ENCODE measurements at regions of chr11 and their contacts with region 1.

Region 1: GRCh38 chr11:64240394-64241174 is at the start of gene FKBP2:
- DNase-seq: peak; percentile 98
- ATAC-seq: peak; percentile 61
- H3K4me3 Mint-ChIP-seq: peak within 1 kb of the TSS; percentile 91
- H3K27ac Mint-ChIP-seq: peak within 1 kb of the TSS; percentile 98
- H3K4me1 Mint-ChIP-seq: peaks cover 75% of the 10 kb centered on the region
- H3K27me3 Mint-ChIP-seq: no peaks in the 10 kb centered on the region
- CTCF ChIP-seq: no peak
- total RNA-seq, gene FKBP2: 31.4 and 39.4 TPM in 2 replicates

Region 2: GRCh38 chr11:63986156-63986931 is 254.2 kb before region 1 on chr11 and contains the start of gene OTUB1:
- CTCF ChIA-PET with region 1: no interaction called
- POLR2A ChIA-PET with region 1: no interaction called
- intact Hi-C with region 1: loop called (anchors 5 kb)
- DNase-seq: peak; percentile 80
- ATAC-seq: peak; percentile 86
- H3K4me3 Mint-ChIP-seq: peak within 1 kb of the TSS; percentile 95
- H3K27ac Mint-ChIP-seq: peak within 1 kb of the TSS; percentile 98
- H3K4me1 Mint-ChIP-seq: peaks cover 43% of the 10 kb centered on the region
- H3K27me3 Mint-ChIP-seq: no peaks in the 10 kb centered on the region
- CTCF ChIP-seq: no peak
- total RNA-seq, gene OTUB1: 87.4 and 92.5 TPM in 2 replicates

Region 3: DNA sequence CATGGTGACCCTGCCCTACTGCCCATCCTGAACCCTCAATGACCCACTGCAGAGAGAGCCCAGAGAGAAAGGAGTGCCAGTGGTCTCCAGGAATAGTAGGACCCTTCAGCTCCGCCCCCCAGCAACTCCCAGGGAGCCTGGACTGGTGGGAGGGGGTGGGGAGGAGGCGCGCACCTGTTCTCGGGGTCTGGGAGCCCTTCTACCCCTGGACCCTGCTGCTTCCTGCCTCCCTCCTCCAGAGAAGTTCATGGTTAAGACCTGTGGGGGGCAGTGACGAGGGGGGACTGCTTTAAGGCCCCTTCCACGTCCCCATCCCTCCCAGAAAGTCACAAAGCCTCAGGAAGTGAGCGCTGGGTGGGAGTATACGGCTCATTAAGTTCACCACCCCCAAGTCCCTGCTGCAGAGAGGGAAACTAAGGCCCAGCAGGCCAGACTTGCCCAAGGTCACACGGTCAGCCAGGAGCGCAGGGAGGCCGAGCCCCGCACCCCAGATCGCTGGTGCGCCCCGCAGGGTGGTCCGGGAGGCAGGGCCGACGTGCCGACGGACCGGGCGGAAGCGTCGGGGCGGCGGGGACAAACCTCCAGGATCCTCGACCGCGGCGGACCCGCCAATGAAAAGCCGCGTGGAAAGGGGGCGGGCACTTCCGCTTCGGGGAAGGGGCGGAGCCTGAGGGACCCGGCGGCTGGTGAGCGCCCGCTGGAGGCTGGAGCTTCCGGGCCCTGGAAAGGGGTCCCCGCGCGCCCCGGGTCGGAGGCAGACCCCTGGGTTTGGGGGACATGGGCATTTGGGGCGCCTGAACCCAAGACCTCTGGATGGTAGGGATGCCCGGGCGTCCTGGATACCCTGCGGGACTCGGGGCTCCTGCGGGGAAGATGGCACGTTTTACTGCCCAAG is 14.7 kb before region 1 on chr11 and contains the starts of genes NUDT22 and TRPT1:
- CTCF ChIA-PET with region 1: interaction called, 3 read pairs
- POLR2A ChIA-PET with region 1: interaction called, 60 read pairs
- intact Hi-C with region 1: loop called (anchors 1 kb)
- DNase-seq: peak; percentile 95
- ATAC-seq: peak; percentile 56
- H3K4me3 Mint-ChIP-seq: peak within 1 kb of the TSS; percentile 87
- H3K27ac Mint-ChIP-seq: peak within 1 kb of the TSS; percentile 81
- H3K4me1 Mint-ChIP-seq: peaks cover 39% of the 10 kb centered on the region
- H3K27me3 Mint-ChIP-seq: no peaks in the 10 kb centered on the region
- CTCF ChIP-seq: no peak
- total RNA-seq, gene NUDT22: 81.0 and 95.3 TPM in 2 replicates
- total RNA-seq, gene TRPT1: 50.6 and 51.3 TPM in 2 replicates

Region 4: GRCh38 chr11:64294774-64295173 is 54.2 kb after region 1 on chr11:
- CTCF ChIA-PET with region 1: no interaction called
- POLR2A ChIA-PET with region 1: no interaction called
- intact Hi-C with region 1: no loop called
- DNase-seq: no peak
- ATAC-seq: no peak
- H3K4me3 Mint-ChIP-seq: no peak overlapping the region
- H3K27ac Mint-ChIP-seq: no peak overlapping the region
- H3K4me1 Mint-ChIP-seq: peaks cover 16% of the 10 kb centered on the region
- H3K27me3 Mint-ChIP-seq: peaks cover 57% of the 10 kb centered on the region
- CTCF ChIP-seq: no peak

Region 5: DNA sequence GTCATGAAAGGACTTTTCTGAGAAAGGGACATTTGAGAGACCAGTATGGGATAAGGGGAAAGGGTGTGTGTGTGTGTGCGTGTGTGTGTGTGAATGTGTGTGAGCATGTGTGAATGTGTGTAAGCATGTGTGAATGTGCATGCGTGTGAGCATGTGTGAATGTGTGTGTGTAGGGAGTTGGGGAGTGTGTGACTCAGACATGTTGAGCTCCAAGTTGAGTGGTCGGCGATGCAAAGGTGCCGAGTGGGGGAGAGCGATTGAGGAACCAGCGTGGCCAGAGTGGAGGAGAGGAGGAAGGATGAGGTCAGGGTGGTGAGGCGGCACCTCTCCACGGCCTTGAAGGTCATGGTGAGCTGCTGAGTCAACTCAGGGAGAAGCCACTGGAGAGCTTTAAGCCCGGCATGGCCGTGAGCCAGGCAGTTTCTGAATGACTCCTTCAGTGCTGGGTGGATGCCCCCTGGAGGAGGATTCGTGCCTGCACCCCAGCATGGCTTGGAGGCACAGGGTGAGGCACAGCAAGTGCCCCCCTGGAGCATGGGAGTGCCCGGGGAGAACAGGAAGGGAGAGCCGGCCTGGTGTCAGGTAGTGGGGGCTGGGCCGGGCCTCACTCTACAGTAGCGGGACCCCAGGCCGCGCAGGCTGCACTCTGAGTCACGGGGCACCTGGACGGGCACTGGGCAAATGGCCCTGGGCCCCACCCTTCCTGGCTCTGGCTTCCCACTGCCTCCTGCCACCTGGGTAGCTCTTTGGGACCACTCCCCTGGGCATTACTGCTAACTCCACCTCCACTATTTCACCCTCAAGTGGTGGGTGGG is 91.2 kb after region 1 on chr11:
- CTCF ChIA-PET with region 1: no interaction called
- POLR2A ChIA-PET with region 1: interaction called, 11 read pairs
- intact Hi-C with region 1: no loop called
- DNase-seq: peak; percentile 52
- ATAC-seq: peak; percentile 32
- H3K4me3 Mint-ChIP-seq: peak overlapping the region; percentile 2
- H3K27ac Mint-ChIP-seq: peak overlapping the region; percentile 5
- H3K4me1 Mint-ChIP-seq: peaks cover 35% of the 10 kb centered on the region
- H3K27me3 Mint-ChIP-seq: no peaks in the 10 kb centered on the region
- CTCF ChIP-seq: no peak